Activated naive CD4-positive, alpha-beta T cell treated with anti-CD3 and anti-CD28 coated beads, Interleukin-2, amount 10 ng/mL, durations not matched to agents 7 days and 5 days (primary cell): ENCODE measurements at regions of chr17 and their contacts with region 1.

Region 1: GRCh38 chr17:21098934-21099689 is 27.7 kb upstream of the DHRS7B start:
- DNase-seq: peak; percentile 87
- H3K4me3 Mint-ChIP-seq: peak overlapping the region; percentile 92
- H3K27ac Mint-ChIP-seq: peak overlapping the region; percentile 92
- H3K4me1 Mint-ChIP-seq: peaks cover 28% of the 10 kb centered on the region
- H3K27me3 Mint-ChIP-seq: no peaks in the 10 kb centered on the region

Region 2: GRCh38 chr17:20955427-20956323 is 143.4 kb before region 1 on chr17:
- CTCF ChIA-PET with region 1: no interaction called
- DNase-seq: no peak
- H3K4me3 Mint-ChIP-seq: no peak overlapping the region
- H3K27ac Mint-ChIP-seq: no peak overlapping the region
- H3K4me1 Mint-ChIP-seq: no peaks in the 10 kb centered on the region
- H3K27me3 Mint-ChIP-seq: peaks cover 38% of the 10 kb centered on the region

Region 3: GRCh38 chr17:21043286-21044232 is 55.6 kb before region 1 on chr17:
- CTCF ChIA-PET with region 1: interaction called, 23 read pairs
- DNase-seq: peak; percentile 98
- H3K4me3 Mint-ChIP-seq: peak overlapping the region; percentile 75
- H3K27ac Mint-ChIP-seq: peak overlapping the region; percentile 95
- H3K4me1 Mint-ChIP-seq: peaks cover 35% of the 10 kb centered on the region
- H3K27me3 Mint-ChIP-seq: peaks cover 4% of the 10 kb centered on the region

Region 4: DNA sequence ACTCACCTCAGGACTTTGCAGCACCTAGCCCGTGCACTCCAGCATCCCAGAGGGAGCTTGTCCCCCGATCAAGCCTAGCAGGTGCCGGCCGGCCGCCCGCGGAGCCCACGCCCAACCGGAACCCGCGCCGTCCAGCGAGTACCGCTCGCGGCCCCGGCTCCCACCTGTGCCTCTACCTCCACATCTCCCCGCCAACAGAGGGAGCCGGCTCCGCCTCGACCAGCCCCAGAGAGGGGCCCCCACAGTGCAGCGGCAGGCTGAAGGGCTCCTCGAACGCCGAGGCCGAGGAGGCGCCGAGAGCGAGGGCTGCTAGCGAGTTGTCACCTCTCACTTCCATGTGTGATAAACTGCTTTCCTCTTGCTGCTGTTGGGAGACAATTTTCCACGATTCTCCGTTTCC is 13.4 kb before region 1 on chr17:
- CTCF ChIA-PET with region 1: no interaction called
- DNase-seq: no peak
- H3K4me3 Mint-ChIP-seq: no peak overlapping the region
- H3K27ac Mint-ChIP-seq: no peak overlapping the region
- H3K4me1 Mint-ChIP-seq: no peaks in the 10 kb centered on the region
- H3K27me3 Mint-ChIP-seq: peaks cover 12% of the 10 kb centered on the region

Region 5: DNA sequence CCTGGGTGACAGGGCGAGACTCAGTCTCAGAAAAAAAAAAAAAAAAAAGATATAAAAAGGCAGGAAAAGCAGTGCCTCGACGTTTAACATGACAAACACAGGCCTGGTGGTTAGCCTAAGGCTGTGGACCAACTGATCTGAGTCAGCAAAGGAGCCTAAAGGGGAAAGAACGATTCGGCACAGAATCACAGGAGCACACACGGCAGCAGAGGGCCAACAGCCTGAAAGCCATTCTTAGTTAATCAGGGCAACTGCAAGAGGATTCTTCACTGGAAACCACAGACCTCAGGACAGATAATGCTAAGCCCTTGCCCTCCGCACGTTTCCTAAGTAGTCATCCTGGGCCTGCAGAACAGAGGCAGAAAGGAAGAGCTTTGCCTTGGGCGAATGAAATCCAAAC is 100.2 kb after region 1 on chr17:
- CTCF ChIA-PET with region 1: no interaction called
- DNase-seq: no peak
- H3K4me3 Mint-ChIP-seq: no peak overlapping the region
- H3K27ac Mint-ChIP-seq: no peak overlapping the region
- H3K4me1 Mint-ChIP-seq: no peaks in the 10 kb centered on the region
- H3K27me3 Mint-ChIP-seq: no peaks in the 10 kb centered on the region

Region 6: DNA sequence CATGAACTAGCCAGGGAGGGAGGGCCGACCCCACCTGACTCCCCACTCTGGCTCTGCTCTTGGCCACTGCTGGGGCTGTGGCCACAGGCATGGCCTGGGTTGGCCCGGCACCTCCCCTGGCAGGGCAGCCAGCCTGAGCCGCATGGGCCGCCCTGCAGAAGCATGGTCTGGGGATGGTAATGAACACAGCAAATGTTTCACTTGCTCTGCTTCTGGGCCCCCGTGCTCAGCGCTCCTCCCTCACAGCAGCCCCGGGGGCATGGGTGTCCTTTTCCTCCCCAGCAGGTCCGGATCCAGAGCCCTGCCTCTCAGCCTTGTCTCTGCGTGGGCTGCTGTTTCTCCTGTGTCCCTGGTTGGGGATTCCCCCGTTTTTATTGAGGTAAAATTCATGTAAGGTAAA is 246.1 kb after region 1 on chr17:
- CTCF ChIA-PET with region 1: no interaction called
- DNase-seq: no peak
- H3K4me3 Mint-ChIP-seq: no peak overlapping the region
- H3K27ac Mint-ChIP-seq: no peak overlapping the region
- H3K4me1 Mint-ChIP-seq: peaks cover 2% of the 10 kb centered on the region
- H3K27me3 Mint-ChIP-seq: no peaks in the 10 kb centered on the region